ENCODE measurements at regions of chr1 and their contacts with region 1.

Region 1: DNA sequence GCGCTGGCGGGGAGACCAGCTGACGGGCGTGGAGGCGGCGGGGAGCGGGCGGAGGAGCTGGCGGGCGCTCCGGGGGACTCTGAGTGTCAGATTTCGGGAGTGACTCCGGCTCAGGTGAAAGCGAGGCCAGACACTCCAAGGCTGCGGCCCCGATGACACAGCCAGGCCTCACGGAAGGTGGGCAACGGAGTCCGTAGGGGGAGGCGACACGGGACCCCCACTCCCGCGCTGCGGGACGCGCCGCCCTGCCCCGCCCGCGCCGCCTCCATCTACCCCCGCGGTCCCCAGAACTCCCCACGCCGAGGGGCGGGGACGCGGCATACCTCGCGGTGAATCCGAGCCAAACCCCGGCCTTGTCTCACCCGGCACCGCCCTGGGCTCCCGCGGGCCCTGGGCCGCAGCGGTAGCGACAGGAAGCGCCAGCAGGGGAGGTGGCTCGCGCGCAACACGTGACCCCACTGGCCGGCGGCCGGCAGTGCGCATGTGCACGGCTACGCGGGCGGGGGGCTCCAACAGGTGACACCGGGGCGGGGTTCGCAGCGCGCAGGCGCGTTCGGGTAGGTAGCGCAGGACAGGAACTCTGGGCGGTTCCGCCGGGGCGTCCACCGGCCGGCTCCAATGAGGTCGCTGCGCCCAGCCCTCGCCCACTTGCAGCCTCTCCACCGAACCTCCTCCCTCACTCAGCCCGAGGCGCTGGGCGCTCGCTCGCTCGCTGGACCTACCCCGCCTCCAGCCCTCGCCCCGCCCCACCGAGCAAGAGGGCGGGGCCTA is at the start of gene CC2D1B:
- DNase-seq: peak; percentile 99
- ATAC-seq: peak; percentile 94
- H3K4me3 Mint-ChIP-seq: peak within 1 kb of the TSS; percentile 94
- H3K27ac Mint-ChIP-seq: peak within 1 kb of the TSS; percentile 93
- H3K4me1 Mint-ChIP-seq: peaks cover 44% of the 10 kb centered on the region
- H3K27me3 Mint-ChIP-seq: no peaks in the 10 kb centered on the region
- total RNA-seq, gene CC2D1B: 22.6 to 25.3 TPM

Region 2: DNA sequence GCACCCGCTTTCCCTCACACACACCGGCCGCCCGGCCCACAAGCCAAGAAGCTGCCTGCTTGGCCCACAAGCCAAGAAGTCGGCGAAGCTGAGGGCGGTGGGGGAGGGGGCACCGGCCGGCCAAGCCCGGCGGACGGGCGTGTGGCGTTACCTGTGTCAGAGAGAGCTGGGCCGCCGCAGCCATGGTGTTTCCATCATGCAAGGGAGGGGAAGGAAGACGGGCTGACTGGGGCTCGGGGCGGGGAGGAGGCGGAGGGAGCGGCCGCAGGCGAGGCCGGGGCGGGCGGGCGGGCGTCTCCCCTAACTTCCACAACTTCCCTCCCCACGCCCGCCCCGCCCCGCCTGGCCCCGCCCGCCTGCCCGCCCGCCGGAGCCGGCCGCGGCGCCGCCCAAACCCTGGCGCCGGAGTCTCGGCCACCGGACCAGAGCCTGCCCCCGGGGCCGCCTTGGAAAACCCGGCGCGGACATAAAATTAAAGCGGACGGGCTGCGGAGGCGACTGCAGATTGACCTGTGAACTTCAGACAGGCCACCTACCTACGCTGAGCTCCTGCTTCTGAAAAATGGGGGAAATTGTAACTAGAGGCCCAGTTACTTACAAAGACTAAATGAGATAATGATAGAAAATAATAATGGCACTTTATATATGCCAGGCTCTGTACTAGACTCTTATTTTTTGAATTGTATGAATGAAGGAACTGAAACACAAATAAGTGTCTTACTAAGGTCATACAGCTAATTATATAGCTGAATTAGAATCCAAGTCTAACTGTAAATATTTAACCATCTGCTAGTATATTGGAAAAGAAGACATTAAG is 846.7 kb before region 1 on chr1 and contains the start of gene EPS15:
- CTCF ChIA-PET with region 1: no interaction called
- POLR2A ChIA-PET with region 1: no interaction called
- intact Hi-C with region 1: loop called in 1 of 2 experiments (anchors 5 kb)
- DNase-seq: peak; percentile 95
- ATAC-seq: peak; percentile 76
- H3K4me3 Mint-ChIP-seq: peak within 1 kb of the TSS; percentile 100
- H3K27ac Mint-ChIP-seq: peak within 1 kb of the TSS; percentile 93
- H3K4me1 Mint-ChIP-seq: peaks cover 48% of the 10 kb centered on the region
- H3K27me3 Mint-ChIP-seq: no peaks in the 10 kb centered on the region
- total RNA-seq, gene EPS15: 59.6 to 61.6 TPM

Region 3: DNA sequence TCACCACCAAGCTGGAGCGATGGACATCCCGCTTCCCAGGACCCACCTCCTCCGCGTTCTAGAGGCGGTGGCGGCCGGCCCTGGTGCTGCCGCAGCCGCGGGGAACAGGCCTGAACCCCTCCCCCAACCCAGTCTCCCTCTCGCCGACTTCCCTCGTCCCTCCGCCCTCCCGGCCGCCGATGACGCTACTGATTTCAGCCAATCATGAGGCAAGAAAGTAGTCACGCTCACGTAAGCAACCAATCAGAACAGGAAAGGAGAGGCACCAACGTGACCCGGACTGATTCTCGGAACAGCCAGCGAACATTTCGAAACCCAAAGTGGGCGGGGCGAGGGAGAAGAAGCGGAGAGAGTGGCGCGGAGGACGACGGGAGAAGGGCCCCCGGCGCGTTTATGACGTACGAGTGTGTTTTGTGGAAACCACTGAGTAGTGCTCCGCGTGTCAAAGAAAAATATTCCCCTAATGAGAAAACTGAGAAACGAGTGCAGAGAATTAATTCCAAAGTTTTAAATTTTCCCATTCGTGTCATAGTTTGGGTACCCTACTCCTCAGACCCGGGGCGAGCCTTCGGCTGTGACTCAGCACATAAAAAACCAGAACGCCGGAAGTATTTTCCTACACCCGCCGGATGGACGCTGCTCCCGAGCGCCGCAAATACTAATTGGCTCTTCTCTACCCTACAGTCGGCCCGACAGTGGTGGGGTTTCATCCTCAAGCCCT is 487.2 kb before region 1 on chr1 and contains the start of gene NRDC:
- CTCF ChIA-PET with region 1: no interaction called
- POLR2A ChIA-PET with region 1: no interaction called
- intact Hi-C with region 1: loop called in 1 of 2 experiments (anchors 1 kb)
- DNase-seq: peak; percentile 100
- ATAC-seq: peak; percentile 95
- H3K4me3 Mint-ChIP-seq: no peak within 1 kb of the TSS
- H3K27ac Mint-ChIP-seq: no peak within 1 kb of the TSS
- H3K4me1 Mint-ChIP-seq: peaks cover 27% of the 10 kb centered on the region
- H3K27me3 Mint-ChIP-seq: peaks cover 12% of the 10 kb centered on the region
- total RNA-seq, gene NRDC: 149 to 186 TPM

Region 4: GRCh38 chr1:52127181-52128180 is 238.4 kb before region 1 on chr1:
- CTCF ChIA-PET with region 1: no interaction called
- POLR2A ChIA-PET with region 1: no interaction called
- intact Hi-C with region 1: loop called in 1 of 2 experiments (anchors 5 kb)
- DNase-seq: peak; percentile 39
- ATAC-seq: peak; percentile 65
- H3K4me3 Mint-ChIP-seq: no peak overlapping the region
- H3K27ac Mint-ChIP-seq: no peak overlapping the region
- H3K4me1 Mint-ChIP-seq: peaks cover 4% of the 10 kb centered on the region
- H3K27me3 Mint-ChIP-seq: peaks cover 14% of the 10 kb centered on the region

Region 5: DNA sequence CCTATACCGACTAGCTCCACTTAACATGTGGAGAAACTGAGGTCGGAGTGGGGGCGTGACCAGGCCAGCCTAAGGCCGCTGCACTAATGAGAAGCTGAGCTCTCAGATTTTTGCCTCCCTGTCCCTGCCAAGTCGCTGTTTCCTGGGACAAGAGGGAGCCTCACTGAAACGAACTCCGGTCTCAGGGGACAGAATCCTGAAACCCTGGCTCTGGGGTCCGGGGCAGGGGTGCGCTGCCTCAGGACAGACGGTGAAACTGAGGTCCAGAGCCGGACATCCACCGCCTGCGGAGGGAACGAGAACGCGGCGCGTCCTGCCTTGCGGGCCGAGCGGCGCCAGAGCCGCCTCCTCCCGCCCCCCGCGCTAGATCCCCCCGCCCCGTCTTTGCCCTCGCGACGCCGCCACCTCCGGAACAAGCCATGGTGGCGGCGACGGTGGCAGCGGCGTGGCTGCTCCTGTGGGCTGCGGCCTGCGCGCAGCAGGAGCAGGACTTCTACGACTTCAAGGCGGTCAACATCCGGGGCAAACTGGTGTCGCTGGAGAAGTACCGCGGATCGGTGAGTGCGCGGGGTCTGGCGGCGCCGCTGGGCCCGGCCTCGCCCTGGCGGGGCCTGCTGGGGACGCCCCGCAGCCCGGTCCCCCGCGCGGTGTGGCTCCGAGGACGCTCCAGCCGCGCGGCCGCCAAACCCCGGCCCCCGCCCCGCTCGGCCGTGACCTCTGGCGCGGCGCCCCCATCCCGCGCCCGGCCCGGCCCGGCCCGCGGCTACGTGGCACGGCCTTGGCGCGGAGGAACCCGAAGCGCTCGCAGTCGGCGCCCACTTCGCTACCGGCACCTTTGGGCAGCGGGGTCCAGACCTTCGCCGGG is 236.3 kb after region 1 on chr1 and contains the start of gene GPX7:
- CTCF ChIA-PET with region 1: no interaction called
- POLR2A ChIA-PET with region 1: no interaction called
- intact Hi-C with region 1: loop called in 1 of 2 experiments (anchors 2 kb)
- DNase-seq: peak; percentile 72
- ATAC-seq: peak; percentile 70
- H3K4me3 Mint-ChIP-seq: peak within 1 kb of the TSS; percentile 86
- H3K27ac Mint-ChIP-seq: peak within 1 kb of the TSS; percentile 94
- H3K4me1 Mint-ChIP-seq: peaks cover 40% of the 10 kb centered on the region
- H3K27me3 Mint-ChIP-seq: no peaks in the 10 kb centered on the region
- total RNA-seq, gene GPX7: 19.0 to 23.1 TPM

Region 6: DNA sequence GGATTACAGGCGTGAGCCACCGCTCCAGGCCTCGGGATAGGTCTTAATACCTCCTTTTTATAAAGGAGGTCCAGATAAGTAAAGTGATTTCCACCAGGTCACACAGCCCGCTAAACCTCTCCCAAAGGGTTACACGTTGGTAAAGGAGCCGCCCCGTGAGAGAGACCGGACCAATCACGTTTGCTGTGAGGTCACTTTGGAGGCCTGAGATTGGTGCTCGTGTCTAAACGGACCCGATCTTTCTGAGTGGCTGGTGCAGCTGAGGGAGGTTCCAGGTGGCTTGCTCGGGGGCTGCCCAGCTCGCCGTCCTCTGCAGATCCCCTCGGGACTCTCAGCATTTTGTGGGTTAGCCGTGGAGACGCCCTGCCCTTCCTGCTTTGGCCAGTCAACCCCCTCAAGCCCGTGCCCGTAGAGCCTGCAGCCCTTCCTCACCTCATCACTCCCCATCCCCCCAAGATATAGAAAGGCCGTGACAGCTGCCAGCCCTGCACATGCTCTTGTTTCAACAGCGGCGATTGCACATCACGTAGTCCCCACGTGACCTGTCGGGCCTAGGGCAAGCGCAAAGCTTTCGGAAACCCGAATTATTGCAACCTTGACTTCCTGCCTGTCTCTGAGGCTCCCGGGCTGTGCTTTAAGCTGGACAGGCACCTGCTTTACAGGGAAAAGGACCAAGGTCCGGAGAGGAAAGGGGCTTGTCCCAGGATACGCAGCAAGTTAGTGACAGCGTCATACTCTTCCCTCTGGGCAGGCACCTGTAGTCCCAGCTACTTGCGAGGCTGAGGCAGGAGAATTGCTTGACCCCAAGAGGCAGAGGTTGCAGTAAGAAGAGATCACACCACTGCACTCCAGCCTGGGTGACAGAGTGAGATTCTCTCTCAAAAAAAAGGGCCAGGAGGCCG is 337.2 kb after region 1 on chr1:
- CTCF ChIA-PET with region 1: no interaction called
- POLR2A ChIA-PET with region 1: no interaction called
- intact Hi-C with region 1: loop called in 1 of 2 experiments (anchors 1 kb)
- DNase-seq: peak; percentile 89
- ATAC-seq: peak; percentile 94
- H3K4me3 Mint-ChIP-seq: peak overlapping the region; percentile 79
- H3K27ac Mint-ChIP-seq: peak overlapping the region; percentile 93
- H3K4me1 Mint-ChIP-seq: peaks cover 16% of the 10 kb centered on the region
- H3K27me3 Mint-ChIP-seq: no peaks in the 10 kb centered on the region

Region 7: GRCh38 chr1:53196485-53197270 is 830.7 kb after region 1 on chr1 and contains the start of gene CPT2:
- CTCF ChIA-PET with region 1: no interaction called
- POLR2A ChIA-PET with region 1: no interaction called
- intact Hi-C with region 1: loop called in 1 of 2 experiments (anchors 10 kb)
- DNase-seq: peak; percentile 96
- ATAC-seq: peak; percentile 98
- H3K4me3 Mint-ChIP-seq: peak within 1 kb of the TSS; percentile 98
- H3K27ac Mint-ChIP-seq: peak within 1 kb of the TSS; percentile 99
- H3K4me1 Mint-ChIP-seq: peaks cover 25% of the 10 kb centered on the region
- H3K27me3 Mint-ChIP-seq: no peaks in the 10 kb centered on the region
- total RNA-seq, gene CPT2: 20.7 to 23.7 TPM

Measured in activated CD4-positive, alpha-beta T cell treated with anti-CD3 and anti-CD28 coated beads for 36 hours (primary cell).